Right lobe of liver (tissue), 6 donors: ENCODE measurements at regions of chr5 and their contacts with region 1.

Region 1: GRCh38 chr5:154937718-154938466 is at the start of gene GEMIN5:
- DNase-seq: peak; percentile 91 to 93 (median 92)
- ATAC-seq: peak; percentile 93 to 97 (median 95)
- H3K4me3 ChIP-seq: peak within 1 kb of the TSS; percentile 88 to 97 (median 96)
- H3K27ac ChIP-seq: peak within 1 kb of the TSS; percentile 35 to 72 (median 59)
- H3K4me1 ChIP-seq: peaks cover 0 to 40% (median 8%) of the 10 kb centered on the region in 4 donors
- H3K27me3 ChIP-seq: no peaks in the 10 kb centered on the region
- CTCF ChIP-seq: no peak
- POLR2A ChIP-seq: peak; percentile 36
- total RNA-seq, gene GEMIN5: 5.7 to 11.3 (median 7.5) TPM

Region 2: GRCh38 chr5:154857530-154858296 is 80.2 kb before region 1 on chr5:
- intact Hi-C with region 1: loop called in 1 of 2 experiments (anchors 10 kb)
- DNase-seq: peak; percentile 96 to 98 (median 97)
- ATAC-seq: peak; percentile 81 to 88 (median 85)
- H3K4me3 ChIP-seq: peak overlapping the region; percentile 64 to 85 (median 80)
- H3K27ac ChIP-seq: peak overlapping the region; percentile 96 to 97 (median 97)
- H3K4me1 ChIP-seq: peaks cover 0 to 35% (median 7%) of the 10 kb centered on the region in 4 donors
- H3K27me3 ChIP-seq: no peaks in the 10 kb centered on the region
- CTCF ChIP-seq: peak in 2 of 4 donors; percentile 23 to 28
- POLR2A ChIP-seq: peak; percentile 74